PC-3 (cell line): ENCODE measurements at regions of chrX and their contacts with region 1.

Region 1: DNA sequence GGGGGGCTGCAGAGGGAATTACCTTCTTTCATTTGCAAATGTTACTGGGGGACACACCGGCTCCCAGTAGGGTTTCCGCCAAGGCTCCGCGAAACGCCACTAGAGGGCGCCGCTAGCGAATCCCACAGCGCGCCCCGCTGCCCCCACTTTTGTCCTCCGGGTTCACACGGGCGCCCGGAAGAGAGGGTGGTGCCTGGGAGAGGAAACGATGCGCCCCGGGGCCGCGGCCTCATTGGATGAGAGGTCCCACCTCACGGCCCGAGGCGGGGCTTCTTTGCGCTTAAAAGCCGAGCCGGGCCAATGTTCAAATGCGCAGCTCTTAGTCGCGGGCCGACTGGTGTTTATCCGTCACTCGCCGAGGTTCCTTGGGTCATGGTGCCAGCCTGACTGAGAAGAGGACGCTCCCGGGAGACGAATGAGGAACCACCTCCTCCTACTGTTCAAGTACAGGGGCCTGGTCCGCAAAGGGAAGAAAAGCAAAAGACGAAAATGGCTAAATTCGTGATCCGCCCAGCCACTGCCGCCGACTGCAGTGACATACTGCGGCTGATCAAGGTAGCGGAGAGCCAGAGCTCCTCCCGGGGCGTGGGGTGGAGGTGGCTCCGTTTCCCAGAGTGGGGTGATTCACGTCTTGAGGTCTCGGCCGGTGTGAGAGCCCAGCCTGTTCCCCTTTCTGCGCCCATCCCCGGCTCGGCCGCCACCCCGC is at the start of gene SAT1:
- DNase-seq: peak; percentile 96
- ATAC-seq: peak; percentile 75
- H3K4me3 ChIP-seq: peak within 1 kb of the TSS; percentile 97
- H3K27ac ChIP-seq: peak within 1 kb of the TSS; percentile 94
- H3K4me1 ChIP-seq: peaks cover 45% of the 10 kb centered on the region
- H3K27me3 ChIP-seq: no peaks in the 10 kb centered on the region
- CTCF ChIP-seq: peak; percentile 87
- total RNA-seq, gene SAT1: 414 and 448 TPM in 2 replicates

Region 2: DNA sequence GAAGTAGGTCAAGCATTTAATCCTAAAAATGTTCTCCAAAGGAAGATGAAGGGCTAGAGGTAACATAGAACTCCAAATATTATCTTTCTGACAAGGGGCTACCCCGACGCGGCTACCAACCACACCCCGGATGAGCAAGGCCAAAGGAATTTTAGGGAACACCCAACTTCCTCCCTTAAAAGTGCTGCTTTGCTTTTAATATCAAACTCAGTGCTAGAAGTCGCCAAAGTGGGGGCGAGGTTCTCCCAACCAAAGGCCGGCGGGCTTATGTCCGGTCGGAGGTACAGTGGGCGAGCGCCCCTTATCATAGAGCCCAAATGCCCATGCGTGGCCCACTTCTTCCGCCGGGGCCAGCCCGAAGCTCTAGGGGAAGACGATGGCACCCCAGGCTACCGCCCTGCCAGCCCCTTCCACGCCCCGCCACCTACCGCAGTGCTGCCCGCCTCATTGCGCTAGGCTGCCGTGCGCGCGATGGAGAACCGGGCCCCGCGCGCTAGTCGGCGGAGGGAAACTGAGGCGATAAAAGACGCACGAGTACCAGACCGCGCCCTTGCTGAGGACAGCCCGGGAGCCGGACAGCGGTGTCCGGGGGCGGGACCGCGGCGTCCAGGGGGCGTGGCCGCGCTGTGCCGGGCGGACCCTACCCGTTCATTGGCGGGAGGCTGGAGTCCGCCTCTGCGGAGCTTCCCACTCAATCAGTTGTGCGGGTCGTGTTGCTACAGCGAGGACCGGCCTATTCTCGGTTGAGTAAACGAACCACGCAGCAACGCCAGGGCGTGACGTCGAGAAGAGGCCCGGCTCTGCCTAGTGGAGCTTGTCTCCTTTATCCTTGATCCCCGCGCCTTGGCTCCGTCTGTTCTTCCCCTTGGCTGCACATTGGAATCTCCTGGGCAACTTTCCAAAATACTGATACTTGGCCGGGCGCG is 40.1 kb before region 1 on chrX and contains the start of gene ACOT9:
- CTCF ChIA-PET with region 1: interaction called, 5 read pairs
- POLR2A ChIA-PET with region 1: interaction called, 7 read pairs
- intact Hi-C with region 1: loop called (anchors 2 kb)
- DNase-seq: peak; percentile 97
- ATAC-seq: peak; percentile 96
- H3K4me3 ChIP-seq: peak within 1 kb of the TSS; percentile 96
- H3K27ac ChIP-seq: peak within 1 kb of the TSS; percentile 92
- H3K4me1 ChIP-seq: peaks cover 11% of the 10 kb centered on the region
- H3K27me3 ChIP-seq: no peaks in the 10 kb centered on the region
- CTCF ChIP-seq: no peak
- total RNA-seq, gene ACOT9: 66.2 and 75.6 TPM in 2 replicates

Region 3: DNA sequence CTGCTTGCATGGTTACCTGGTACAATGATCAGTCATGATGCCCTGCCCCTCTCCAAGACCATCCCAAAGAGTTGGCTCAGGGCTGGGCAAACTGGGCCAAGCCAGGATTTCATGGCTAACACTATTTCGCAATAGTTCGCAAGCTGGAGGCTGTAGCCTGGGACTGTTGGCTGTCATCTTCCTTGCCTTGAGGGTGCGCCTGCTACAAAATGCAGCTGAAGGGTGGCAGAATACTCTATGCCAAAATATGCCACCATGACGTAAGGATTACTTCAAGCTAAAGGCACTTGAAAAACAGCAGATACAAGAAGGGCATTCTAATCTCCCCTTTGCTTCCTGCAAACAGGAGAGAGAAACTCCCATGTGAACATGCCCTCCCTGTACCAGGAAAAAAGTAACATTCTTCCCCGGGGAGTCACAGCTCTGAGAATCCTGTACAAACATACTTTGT is 20.9 kb after region 1 on chrX:
- CTCF ChIA-PET with region 1: no interaction called
- POLR2A ChIA-PET with region 1: interaction called, 17 read pairs
- intact Hi-C with region 1: loop called (anchors 1 kb)
- DNase-seq: peak; percentile 83
- ATAC-seq: peak; percentile 52
- H3K4me3 ChIP-seq: peak overlapping the region; percentile 17
- H3K27ac ChIP-seq: peak overlapping the region; percentile 97
- H3K4me1 ChIP-seq: peaks cover 46% of the 10 kb centered on the region
- H3K27me3 ChIP-seq: no peaks in the 10 kb centered on the region
- CTCF ChIP-seq: no peak

Region 4: GRCh38 chrX:23901805-23902204 is 118.8 kb after region 1 on chrX:
- CTCF ChIA-PET with region 1: interaction called, 24 read pairs
- POLR2A ChIA-PET with region 1: interaction called, 14 read pairs
- intact Hi-C with region 1: loop called (anchors 1 kb)
- DNase-seq: peak; percentile 70
- ATAC-seq: peak; percentile 74
- H3K4me3 ChIP-seq: no peak overlapping the region
- H3K27ac ChIP-seq: peak overlapping the region; percentile 92
- H3K4me1 ChIP-seq: peaks cover 61% of the 10 kb centered on the region
- H3K27me3 ChIP-seq: no peaks in the 10 kb centered on the region
- CTCF ChIP-seq: peak; percentile 67